Ovary (tissue), 10 donors: ENCODE measurements at regions of chr16 and their contacts with region 1.

Region 1: DNA sequence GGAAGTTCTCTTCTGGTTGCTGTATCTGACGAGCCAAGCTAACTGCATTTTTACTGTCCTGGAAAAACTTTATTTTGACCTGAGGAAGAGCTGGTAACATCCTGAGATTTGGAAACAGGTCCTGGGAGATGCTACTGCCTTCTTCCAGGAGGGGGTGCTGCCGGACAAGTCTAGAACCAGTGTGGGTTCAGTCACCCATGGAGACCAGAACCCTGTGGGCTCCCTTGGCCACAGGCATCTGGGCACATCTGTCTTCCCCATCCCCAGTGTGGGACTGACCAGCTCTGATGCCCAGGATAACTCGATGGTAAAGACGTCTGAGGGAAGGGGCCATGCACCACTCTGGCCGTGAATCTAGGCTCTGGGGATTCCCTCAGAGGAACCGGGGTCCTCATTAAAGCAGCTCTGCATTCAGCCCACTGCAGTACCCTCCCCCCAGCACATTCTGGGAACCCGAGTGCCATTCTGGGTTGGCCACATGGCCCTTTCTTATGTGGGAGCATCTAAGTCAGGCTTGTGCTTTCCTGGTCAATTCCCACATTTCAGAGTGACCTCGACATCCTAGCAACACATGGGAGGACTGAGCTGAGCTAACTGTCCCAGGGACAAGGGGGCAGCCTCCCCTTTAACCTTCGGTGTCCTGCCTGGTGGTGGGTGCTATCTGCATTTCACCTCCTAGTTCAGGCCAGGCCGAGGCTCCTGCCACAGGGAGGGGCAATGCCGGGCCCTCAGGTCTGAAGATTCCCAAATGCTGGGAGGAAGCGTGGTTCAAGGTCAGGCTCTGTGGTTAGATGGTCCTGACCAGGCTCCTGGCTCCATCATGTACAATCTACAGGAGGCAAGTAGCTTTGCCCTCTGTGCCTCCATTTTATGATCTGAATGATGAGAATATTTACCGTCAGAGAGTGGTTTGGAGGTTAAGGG is 6.4 kb downstream of the C16orf86 start:
- DNase-seq: peak; percentile 62 to 79 (median 76)
- H3K4me3 ChIP-seq: no peak overlapping the region
- H3K27ac ChIP-seq: peak overlapping the region; percentile 46 to 72
- H3K4me1 ChIP-seq: peaks cover 12% of the 10 kb centered on the region
- H3K27me3 ChIP-seq: no peaks in the 10 kb centered on the region
- CTCF ChIP-seq: peak; percentile 30 to 61 (median 54)
- EP300 ChIP-seq: no peak
- POLR2A ChIP-seq: no peak

Region 2: GRCh38 chr16:67806428-67807147 is 133.6 kb after region 1 on chr16 and contains the starts of genes RANBP10 and TSNAXIP1:
- intact Hi-C with region 1: loop called in 1 of 4 experiments (anchors 10 kb)
- DNase-seq: peak; percentile 95 to 97 (median 96)
- H3K4me3 ChIP-seq: peak within 1 kb of the TSS; percentile 100
- H3K27ac ChIP-seq: peak within 1 kb of the TSS; percentile 52 to 71
- H3K4me1 ChIP-seq: peaks cover 4% of the 10 kb centered on the region
- H3K27me3 ChIP-seq: no peaks in the 10 kb centered on the region
- CTCF ChIP-seq: no peak
- EP300 ChIP-seq: no peak
- POLR2A ChIP-seq: peak; percentile 86
- total RNA-seq, gene RANBP10: 8.3 to 19.6 (median 17.1) TPM
- total RNA-seq, gene TSNAXIP1: 2.4 to 13.1 (median 3.2) TPM

Region 3: DNA sequence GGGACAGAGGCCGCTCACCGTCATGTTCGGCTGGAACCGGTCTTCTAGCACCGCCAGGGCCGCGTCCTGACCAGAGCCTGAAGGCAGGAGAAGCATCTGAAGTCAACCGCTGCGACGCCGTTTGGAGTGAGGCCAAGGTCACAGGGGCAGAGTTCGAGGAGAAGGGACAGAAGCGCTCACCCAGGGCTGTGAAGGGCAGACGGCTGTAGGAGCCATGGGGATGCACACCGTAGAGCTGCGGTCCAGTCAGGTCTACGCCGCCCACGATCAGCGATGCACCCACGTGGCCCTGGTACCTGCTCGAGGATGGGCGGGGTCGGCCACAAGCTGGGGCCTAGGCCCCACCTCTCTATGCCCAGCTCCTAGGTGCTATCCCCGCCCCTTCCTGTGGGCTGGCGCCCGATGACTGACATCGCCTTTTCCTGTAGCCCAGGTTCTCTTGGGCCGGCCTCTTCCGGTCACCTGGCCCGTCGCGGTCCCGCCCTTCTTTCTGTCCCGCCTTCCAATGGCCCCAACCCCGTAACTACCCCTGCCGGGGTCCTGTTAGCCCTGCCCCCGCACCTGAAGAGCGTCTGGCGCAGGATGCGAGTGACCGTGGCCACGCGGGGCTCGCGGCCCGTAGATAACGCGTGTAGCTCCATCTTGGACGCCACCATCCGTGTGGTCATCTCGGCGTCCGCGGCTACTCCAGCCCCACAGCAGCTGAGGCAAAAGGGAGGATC is 262.6 kb after region 1 on chr16:
- intact Hi-C with region 1: loop called in 2 of 4 experiments (anchors 5 to 10 kb)
- DNase-seq: peak; percentile 94 to 96 (median 94)
- H3K4me3 ChIP-seq: peak overlapping the region; percentile 96
- H3K27ac ChIP-seq: peak overlapping the region; percentile 83 to 85
- H3K4me1 ChIP-seq: peaks cover 15% of the 10 kb centered on the region
- H3K27me3 ChIP-seq: no peaks in the 10 kb centered on the region
- CTCF ChIP-seq: peak in 1 of 3 donors; percentile 8
- EP300 ChIP-seq: no peak
- POLR2A ChIP-seq: peak; percentile 70

Region 4: GRCh38 chr16:68022704-68023522 is 349.9 kb after region 1 on chr16 and contains the starts of genes DDX28 and DUS2:
- intact Hi-C with region 1: loop called in 1 of 4 experiments (anchors 10 kb)
- DNase-seq: peak; percentile 87 to 96 (median 92)
- H3K4me3 ChIP-seq: peak within 1 kb of the TSS; percentile 92
- H3K27ac ChIP-seq: peak within 1 kb of the TSS; percentile 74 to 77
- H3K4me1 ChIP-seq: peaks cover 9% of the 10 kb centered on the region
- H3K27me3 ChIP-seq: no peaks in the 10 kb centered on the region
- CTCF ChIP-seq: peak in 1 of 3 donors; percentile 37
- EP300 ChIP-seq: no peak
- POLR2A ChIP-seq: peak; percentile 70
- total RNA-seq, gene DDX28: 6.8 to 14.0 (median 9.7) TPM
- total RNA-seq, gene DUS2: 4.8 to 15.7 (median 8.5) TPM